Posterior vena cava (tissue), 2 donors: ENCODE measurements at regions of chr1 and their contacts with region 1.

Region 1: GRCh38 chr1:243946946-243947345 is 96.9 kb upstream of the AKT3 start:
- DNase-seq: no peak

Region 2: GRCh38 chr1:243903895-243904294 is 43.1 kb before region 1 on chr1:
- intact Hi-C with region 1: loop called in 1 of 2 experiments (anchors 2 kb)
- DNase-seq: no peak

Region 3: GRCh38 chr1:243916180-243916579 is 30.8 kb before region 1 on chr1:
- intact Hi-C with region 1: loop called in 1 of 2 experiments (anchors 1 kb)
- DNase-seq: no peak